Activated T-helper 2 cell treated with anti-CD3 and anti-CD28 coated beads, Interferon-gamma antibody, Interleukin-2, Interleukin-4, amounts not matched to agents 10 μg/mL and 5 μg/mL and 100 μg/mL, durations not matched to agents 14 hours and 24 hours and 36 hours (primary cell): ENCODE measurements at regions of chr5 and their contacts with region 1.

Region 1: DNA sequence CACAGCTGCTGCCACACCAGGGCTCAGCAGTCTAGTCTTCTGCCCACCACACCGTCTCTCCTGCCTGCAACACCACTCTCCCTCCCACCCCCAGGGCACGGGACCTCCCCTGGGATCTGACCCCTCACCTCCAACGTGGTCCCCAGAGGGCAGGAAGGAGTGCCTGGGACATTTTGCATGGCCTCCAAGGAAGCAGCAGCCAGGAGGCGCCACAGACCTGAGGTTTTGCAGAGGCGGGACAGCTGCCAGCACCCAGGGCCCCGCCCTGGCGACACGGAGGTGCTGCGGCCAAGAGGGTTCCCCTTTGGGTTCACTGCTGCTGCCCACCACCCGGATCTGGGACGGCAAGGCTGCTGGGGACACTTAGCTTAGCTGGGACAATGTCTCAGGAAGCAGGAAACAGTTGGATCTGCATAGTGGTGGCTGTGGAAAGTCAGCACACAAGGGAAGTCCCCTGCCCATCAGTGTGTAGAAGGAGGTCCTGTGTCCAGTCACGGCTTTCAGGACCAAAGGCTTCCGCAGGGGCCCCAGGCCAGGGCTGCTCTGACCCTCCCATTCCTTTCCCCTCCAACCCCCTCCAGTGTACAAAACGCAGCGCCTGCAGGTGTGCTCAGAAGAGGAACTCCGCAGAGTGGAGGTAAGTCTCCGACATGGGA is 13.8 kb downstream of the PROP1 start:
- DNase-seq: no peak
- H3K4me3 Mint-ChIP-seq: no peak overlapping the region
- H3K27ac Mint-ChIP-seq: no peak overlapping the region
- H3K4me1 Mint-ChIP-seq: peaks cover 6% of the 10 kb centered on the region
- H3K27me3 Mint-ChIP-seq: peaks cover 43% of the 10 kb centered on the region

Region 2: DNA sequence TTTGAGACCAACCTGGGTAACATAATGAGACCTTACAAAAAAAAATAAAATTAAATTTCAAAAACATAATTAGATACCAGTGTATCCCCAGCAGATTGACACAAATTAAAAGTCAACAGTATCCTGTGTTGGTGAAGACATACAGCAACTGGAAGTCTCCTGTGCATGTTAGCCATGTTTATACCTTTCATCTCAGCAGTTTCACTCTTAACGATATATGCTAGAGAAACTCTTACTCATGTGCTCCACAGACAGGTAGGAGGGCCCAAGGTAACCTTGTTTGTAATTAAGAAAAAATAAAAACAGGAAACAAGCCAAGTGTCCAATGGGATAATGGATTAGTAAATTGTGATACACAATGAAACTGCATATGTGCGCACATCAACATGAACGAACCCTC is 81.1 kb after region 1 on chr5:
- intact Hi-C with region 1: loop called (anchors 2 kb)
- DNase-seq: no peak
- H3K4me3 Mint-ChIP-seq: no peak overlapping the region
- H3K27ac Mint-ChIP-seq: no peak overlapping the region
- H3K4me1 Mint-ChIP-seq: peaks cover 5% of the 10 kb centered on the region
- H3K27me3 Mint-ChIP-seq: peaks cover 5% of the 10 kb centered on the region